A673 (cell line): ENCODE measurements at regions of chr11 and their contacts with region 1.

Region 1: GRCh38 chr11:37511425-37511933 is 913.4 kb upstream of the RAG2 start:
- DNase-seq: no peak
- H3K4me3 ChIP-seq: no peak overlapping the region
- H3K27ac ChIP-seq: no peak overlapping the region
- H3K4me1 ChIP-seq: peaks cover 6% of the 10 kb centered on the region
- H3K27me3 ChIP-seq: no peaks in the 10 kb centered on the region
- CTCF ChIP-seq: no peak

Region 2: DNA sequence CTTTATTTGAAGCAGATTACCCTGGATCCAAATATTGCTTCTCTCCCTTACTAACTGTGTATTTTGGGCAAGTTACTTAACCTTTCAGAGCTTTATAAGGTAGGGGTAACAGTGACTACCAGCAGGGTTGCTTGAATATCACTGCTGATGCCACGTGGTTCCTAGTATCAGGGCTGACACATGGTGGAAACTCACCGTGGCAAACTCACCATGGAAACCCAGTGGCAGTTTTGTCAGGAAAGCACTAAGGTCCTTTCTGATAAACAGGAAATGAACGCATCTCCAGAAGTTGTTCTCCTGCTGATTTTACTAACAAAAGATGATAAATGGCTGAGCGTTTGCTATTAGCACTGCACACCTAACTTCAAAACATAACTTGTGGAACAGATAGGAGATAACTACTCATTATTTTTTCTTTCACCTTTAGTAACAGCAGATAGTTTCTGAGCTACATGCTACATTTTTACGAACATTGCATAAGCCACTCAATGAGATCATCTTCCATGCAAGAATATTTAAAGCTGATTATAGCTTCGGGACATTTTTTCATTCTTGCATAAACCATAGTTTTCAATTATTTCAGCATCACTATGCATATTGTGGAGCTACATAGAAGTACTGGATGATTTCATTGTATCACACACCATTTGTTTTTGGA is 853.7 kb before region 1 on chr11:
- CTCF ChIA-PET with region 1: no interaction called
- POLR2A ChIA-PET with region 1: no interaction called
- intact Hi-C with region 1: no loop called
- DNase-seq: peak; percentile 67
- H3K4me3 ChIP-seq: no peak overlapping the region
- H3K27ac ChIP-seq: no peak overlapping the region
- H3K4me1 ChIP-seq: peaks cover 10% of the 10 kb centered on the region
- H3K27me3 ChIP-seq: no peaks in the 10 kb centered on the region
- CTCF ChIP-seq: no peak

Region 3: DNA sequence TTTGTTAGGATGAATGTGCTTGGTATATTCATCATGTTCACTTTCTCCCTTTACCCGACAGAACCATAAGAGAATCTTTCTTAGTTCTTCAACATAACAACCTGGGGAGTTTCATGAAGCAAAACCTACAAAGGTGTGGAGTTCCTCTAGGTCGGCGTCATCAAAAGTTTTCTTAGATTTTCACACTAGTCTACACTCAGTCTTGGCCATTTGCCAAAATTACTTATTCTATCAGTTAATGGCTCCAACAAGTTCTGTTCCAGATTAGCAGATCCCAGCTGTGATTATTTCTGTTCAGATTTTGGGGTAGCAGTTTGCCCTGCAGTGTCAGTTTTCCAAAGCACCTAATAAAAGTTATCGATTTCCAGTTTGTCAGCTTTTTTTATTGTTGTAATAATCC is 22.4 kb after region 1 on chr11:
- CTCF ChIA-PET with region 1: no interaction called
- POLR2A ChIA-PET with region 1: interaction called, 11 read pairs
- intact Hi-C with region 1: no loop called
- DNase-seq: peak; percentile 50
- H3K4me3 ChIP-seq: no peak overlapping the region
- H3K27ac ChIP-seq: no peak overlapping the region
- H3K4me1 ChIP-seq: peaks cover 8% of the 10 kb centered on the region
- H3K27me3 ChIP-seq: no peaks in the 10 kb centered on the region
- CTCF ChIP-seq: no peak

Region 4: GRCh38 chr11:37699644-37700043 is 188.2 kb after region 1 on chr11:
- CTCF ChIA-PET with region 1: no interaction called
- POLR2A ChIA-PET with region 1: no interaction called
- intact Hi-C with region 1: no loop called
- DNase-seq: no peak
- H3K4me3 ChIP-seq: no peak overlapping the region
- H3K27ac ChIP-seq: no peak overlapping the region
- H3K4me1 ChIP-seq: peaks cover 2% of the 10 kb centered on the region
- H3K27me3 ChIP-seq: no peaks in the 10 kb centered on the region
- CTCF ChIP-seq: no peak

Region 5: GRCh38 chr11:37788141-37788877 is 276.8 kb after region 1 on chr11:
- CTCF ChIA-PET with region 1: no interaction called
- POLR2A ChIA-PET with region 1: no interaction called
- intact Hi-C with region 1: no loop called
- DNase-seq: peak; percentile 22
- H3K4me3 ChIP-seq: no peak overlapping the region
- H3K27ac ChIP-seq: no peak overlapping the region
- H3K4me1 ChIP-seq: no peaks in the 10 kb centered on the region
- H3K27me3 ChIP-seq: no peaks in the 10 kb centered on the region
- CTCF ChIP-seq: no peak